Left lung (tissue), 14 donors: ENCODE measurements at regions of chr12 and their contacts with region 1.

Region 1: GRCh38 chr12:3885277-3886094 is 12.3 kb upstream of the PARP11 start:
- DNase-seq: peak in 2 of 4 donors; percentile 75 to 78
- ATAC-seq: peak; percentile 78
- H3K4me3 ChIP-seq: no peak overlapping the region
- H3K27ac ChIP-seq: peak overlapping the region; percentile 70 to 71
- H3K4me1 ChIP-seq: no peaks in the 10 kb centered on the region
- H3K27me3 ChIP-seq: peaks cover 0 to 11% of the 10 kb centered on the region in 2 donors
- CTCF ChIP-seq: peak; percentile 56 to 84

Region 2: DNA sequence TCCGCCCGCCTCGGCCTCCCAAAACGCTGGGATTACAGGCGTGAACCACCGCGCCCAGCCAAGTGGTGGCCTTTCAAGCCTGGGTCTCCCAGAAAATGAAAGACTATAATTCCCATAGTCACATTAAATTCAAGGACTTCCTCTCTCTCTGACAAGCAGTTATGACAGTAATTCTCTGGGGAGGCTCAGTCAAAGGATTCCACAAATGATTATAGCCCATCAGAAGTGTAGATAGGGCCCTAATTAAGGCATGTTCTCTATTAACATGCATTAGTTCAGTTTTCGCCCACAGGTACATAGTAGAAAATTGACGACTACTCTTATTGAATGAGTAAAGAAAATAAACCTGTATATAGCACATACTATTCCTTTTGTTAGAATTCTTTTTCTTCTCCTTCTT is 378.1 kb before region 1 on chr12:
- intact Hi-C with region 1: no loop called
- DNase-seq: no peak
- ATAC-seq: no peak
- H3K4me3 ChIP-seq: no peak overlapping the region
- H3K27ac ChIP-seq: no peak overlapping the region
- H3K4me1 ChIP-seq: no peaks in the 10 kb centered on the region
- H3K27me3 ChIP-seq: peaks cover 0 to 6% of the 10 kb centered on the region in 2 donors
- CTCF ChIP-seq: no peak

Region 3: DNA sequence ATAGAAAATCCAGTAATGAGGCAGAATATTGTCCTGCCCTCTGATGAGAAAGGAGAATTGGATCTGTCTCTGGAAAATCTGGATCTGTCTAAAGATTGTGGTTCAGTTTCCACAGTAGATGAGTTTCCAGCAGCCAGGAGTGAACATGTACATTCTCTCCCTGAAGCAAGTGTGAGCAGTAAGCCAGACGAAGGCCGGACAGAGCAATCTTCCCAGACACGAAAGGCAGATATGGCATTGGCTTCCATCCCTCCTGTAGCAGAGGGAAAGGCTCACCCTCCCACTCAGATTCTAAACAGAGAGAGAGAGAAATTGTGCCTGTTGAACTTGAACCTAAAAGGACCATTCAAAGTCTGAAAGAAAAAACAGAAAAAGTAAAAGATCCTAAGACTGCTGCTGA is 43.7 kb before region 1 on chr12:
- intact Hi-C with region 1: no loop called
- DNase-seq: no peak
- ATAC-seq: no peak
- H3K4me3 ChIP-seq: no peak overlapping the region
- H3K27ac ChIP-seq: no peak overlapping the region
- H3K4me1 ChIP-seq: peaks cover 0 to 5% of the 10 kb centered on the region in 2 donors
- H3K27me3 ChIP-seq: no peaks in the 10 kb centered on the region
- CTCF ChIP-seq: no peak

Region 4: GRCh38 chr12:4044736-4045730 is 159.5 kb after region 1 on chr12:
- intact Hi-C with region 1: loop called in 1 of 2 experiments (anchors 5 kb)
- DNase-seq: no peak
- ATAC-seq: no peak
- H3K4me3 ChIP-seq: no peak overlapping the region
- H3K27ac ChIP-seq: no peak overlapping the region
- H3K4me1 ChIP-seq: no peaks in the 10 kb centered on the region
- H3K27me3 ChIP-seq: no peaks in the 10 kb centered on the region
- CTCF ChIP-seq: no peak

Region 5: DNA sequence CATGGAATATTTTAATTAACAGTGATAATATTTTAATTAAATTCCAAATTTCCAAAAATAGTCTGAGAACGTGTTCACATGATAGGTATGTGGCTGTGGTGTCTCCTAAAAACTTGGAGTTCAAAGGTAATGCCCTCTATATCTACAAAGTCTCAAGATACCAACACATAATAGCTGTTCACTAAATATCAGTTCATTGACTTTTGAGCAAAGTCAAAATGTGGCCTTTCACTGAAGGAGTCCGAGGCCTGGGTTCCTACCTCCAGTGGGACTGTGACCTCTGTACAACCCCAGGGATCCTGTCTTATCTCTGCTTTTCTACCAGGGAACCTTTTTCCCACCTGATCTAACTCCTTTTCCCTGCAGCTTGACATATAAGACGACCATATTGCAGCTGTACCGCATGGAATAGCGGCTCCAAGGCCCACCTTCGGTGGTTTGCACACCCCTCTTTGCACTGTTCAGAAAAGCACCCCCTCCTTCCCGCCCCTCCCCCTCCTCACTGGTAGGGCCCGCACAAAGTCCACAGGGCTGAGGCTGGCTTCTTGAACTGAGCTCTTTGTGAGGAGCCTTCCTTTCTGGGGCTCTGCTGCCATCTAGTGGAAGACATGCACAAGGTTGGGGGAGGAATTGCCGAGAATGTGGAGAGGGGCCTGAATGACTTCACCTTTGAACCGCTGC is 391.2 kb after region 1 on chr12:
- intact Hi-C with region 1: loop called (anchors 10 kb)
- DNase-seq: peak in 3 of 4 donors; percentile 88 to 95 (median 89)
- ATAC-seq: peak; percentile 66
- H3K4me3 ChIP-seq: peak overlapping the region in 1 of 2 donors; percentile 64
- H3K27ac ChIP-seq: peak overlapping the region in 1 of 2 donors; percentile 94
- H3K4me1 ChIP-seq: peaks cover 34 to 92% of the 10 kb centered on the region in 2 donors
- H3K27me3 ChIP-seq: peaks cover 0 to 47% of the 10 kb centered on the region in 2 donors
- CTCF ChIP-seq: peak; percentile 68 to 88

Region 6: DNA sequence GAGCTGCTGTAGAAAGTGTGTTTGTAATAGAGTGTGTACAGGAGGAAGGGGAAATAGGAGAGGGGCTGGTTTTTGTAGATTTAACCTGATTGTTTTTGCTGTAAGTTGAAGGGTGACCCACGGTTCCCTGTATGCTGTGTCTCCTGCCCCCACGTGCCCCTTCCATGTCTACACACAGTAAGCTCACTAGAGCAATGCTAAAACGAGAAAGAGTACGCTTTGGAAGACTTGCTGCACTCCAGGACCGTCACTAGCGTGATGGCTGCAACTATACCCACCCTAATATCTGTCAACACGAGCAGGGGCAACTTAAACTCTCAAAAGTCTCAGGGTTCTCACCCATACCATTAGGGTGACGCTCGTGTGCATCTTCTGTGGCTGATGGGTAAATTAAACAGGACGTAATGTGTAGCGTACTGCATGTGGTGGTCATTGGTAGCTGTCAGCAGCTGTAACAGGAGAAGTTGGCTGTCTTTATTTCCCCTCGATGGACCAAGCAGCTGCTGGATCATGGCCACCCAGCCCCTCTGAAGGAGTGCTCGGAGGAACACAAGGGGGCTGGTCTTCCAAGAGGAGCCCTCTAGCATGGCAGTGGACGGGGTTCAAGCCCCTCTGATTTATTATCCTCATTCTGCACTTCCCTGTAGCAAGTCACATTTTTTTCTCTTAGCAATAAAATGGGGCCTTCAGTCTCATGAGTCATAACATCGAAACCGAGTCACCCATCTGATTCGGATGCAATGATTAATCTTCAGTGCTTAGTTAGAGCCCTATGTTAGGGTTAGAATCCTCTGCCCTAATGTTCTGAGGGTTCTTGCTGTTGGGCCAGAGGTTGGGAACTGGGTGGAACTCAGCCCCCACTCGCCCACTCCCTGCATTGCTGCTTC is 402.1 kb after region 1 on chr12:
- intact Hi-C with region 1: loop called in 1 of 2 experiments (anchors 10 kb)
- DNase-seq: no peak
- ATAC-seq: no peak
- H3K4me3 ChIP-seq: no peak overlapping the region
- H3K27ac ChIP-seq: no peak overlapping the region
- H3K4me1 ChIP-seq: peaks cover 0 to 44% of the 10 kb centered on the region in 2 donors
- H3K27me3 ChIP-seq: no peaks in the 10 kb centered on the region
- CTCF ChIP-seq: no peak